Right cardiac atrium (tissue), 5 donors: ENCODE measurements at regions of chr15 and their contacts with region 1.

Region 1: GRCh38 chr15:73633111-73633990 is at the start of gene NPTN:
- DNase-seq: peak; percentile 99 to 100 (median 100)
- ATAC-seq: peak; percentile 97
- H3K4me3 ChIP-seq: peak within 1 kb of the TSS; percentile 98
- H3K27ac ChIP-seq: peak within 1 kb of the TSS; percentile 98
- H3K4me1 ChIP-seq: peaks cover 7% of the 10 kb centered on the region
- H3K27me3 ChIP-seq: no peaks in the 10 kb centered on the region
- total RNA-seq, gene NPTN: 262 to 320 (median 306) TPM

Region 2: DNA sequence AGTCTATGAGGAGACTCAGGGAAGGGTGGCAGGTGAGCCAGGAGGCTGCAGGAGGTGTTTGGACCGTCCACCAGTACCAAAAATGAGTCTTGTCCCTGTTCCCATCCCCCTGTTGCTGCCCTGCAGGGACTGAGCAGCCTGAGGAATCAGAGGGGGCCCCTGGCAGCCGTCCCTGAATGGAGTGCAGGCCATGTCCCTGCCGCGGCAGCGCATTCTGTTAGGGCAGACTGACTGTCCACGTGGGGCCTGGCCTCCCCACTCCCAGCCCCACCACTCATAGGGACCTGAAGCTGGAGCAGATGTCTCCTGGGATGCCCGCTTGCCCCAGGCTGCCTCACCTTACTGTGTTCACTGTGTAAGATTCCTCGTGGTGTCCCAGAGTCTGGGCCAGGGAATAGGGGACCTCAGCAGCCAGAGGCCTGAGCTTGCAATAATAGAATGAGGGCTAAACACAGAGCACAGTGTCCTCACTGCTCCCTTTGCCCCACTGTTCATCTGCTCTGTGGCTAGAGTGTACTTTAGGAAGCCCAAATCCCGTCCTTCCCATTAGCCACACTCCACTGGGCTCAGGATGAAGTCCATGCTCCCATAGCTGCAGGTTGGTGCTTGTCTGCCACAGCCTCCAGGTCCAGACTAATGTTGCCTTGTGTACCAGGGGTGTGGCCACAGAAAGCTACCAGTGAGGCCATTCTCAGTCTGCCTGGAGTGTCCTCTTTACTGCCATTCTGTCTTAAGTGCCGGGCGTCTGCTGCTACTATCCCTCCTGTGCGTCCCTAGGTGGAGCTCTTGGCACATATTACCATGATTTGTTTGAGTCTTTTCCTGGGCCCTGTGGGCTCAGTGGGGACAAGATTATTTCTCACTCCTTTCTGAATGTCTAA is 327.8 kb before region 1 on chr15:
- intact Hi-C with region 1: loop called in 3 of 4 experiments (anchors 10 kb)
- DNase-seq: no peak
- ATAC-seq: peak; percentile 64 to 74
- H3K4me3 ChIP-seq: no peak overlapping the region
- H3K27ac ChIP-seq: no peak overlapping the region
- H3K4me1 ChIP-seq: no peaks in the 10 kb centered on the region
- H3K27me3 ChIP-seq: no peaks in the 10 kb centered on the region

Region 3: GRCh38 chr15:73560501-73561117 is 72.7 kb before region 1 on chr15:
- intact Hi-C with region 1: loop called (anchors 5 kb)
- DNase-seq: no peak
- ATAC-seq: no peak
- H3K4me3 ChIP-seq: no peak overlapping the region
- H3K27ac ChIP-seq: no peak overlapping the region
- H3K4me1 ChIP-seq: peaks cover 3% of the 10 kb centered on the region
- H3K27me3 ChIP-seq: no peaks in the 10 kb centered on the region

Region 4: DNA sequence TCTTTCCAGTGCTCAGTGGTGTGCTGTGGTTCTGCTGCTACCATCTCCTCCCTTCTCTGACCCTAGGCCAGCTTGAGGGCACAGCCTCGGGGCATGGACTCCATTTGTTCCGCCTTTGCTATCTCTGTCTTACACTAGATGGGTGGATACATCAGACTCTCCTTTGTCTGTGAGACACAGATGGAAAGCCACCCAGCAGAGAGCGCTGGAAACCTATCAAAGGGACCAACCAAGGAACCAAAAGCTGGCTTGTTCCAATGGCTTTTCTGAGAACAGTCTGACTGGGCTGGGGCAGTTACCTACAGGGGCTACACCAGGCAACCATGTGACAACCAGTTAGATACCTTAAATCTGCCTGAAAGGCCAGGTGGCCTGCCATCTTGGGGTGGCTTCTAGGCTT is 64.0 kb before region 1 on chr15:
- intact Hi-C with region 1: loop called (anchors 5 kb)
- DNase-seq: no peak
- ATAC-seq: no peak
- H3K4me3 ChIP-seq: no peak overlapping the region
- H3K27ac ChIP-seq: no peak overlapping the region
- H3K4me1 ChIP-seq: peaks cover 3% of the 10 kb centered on the region
- H3K27me3 ChIP-seq: no peaks in the 10 kb centered on the region

Region 5: DNA sequence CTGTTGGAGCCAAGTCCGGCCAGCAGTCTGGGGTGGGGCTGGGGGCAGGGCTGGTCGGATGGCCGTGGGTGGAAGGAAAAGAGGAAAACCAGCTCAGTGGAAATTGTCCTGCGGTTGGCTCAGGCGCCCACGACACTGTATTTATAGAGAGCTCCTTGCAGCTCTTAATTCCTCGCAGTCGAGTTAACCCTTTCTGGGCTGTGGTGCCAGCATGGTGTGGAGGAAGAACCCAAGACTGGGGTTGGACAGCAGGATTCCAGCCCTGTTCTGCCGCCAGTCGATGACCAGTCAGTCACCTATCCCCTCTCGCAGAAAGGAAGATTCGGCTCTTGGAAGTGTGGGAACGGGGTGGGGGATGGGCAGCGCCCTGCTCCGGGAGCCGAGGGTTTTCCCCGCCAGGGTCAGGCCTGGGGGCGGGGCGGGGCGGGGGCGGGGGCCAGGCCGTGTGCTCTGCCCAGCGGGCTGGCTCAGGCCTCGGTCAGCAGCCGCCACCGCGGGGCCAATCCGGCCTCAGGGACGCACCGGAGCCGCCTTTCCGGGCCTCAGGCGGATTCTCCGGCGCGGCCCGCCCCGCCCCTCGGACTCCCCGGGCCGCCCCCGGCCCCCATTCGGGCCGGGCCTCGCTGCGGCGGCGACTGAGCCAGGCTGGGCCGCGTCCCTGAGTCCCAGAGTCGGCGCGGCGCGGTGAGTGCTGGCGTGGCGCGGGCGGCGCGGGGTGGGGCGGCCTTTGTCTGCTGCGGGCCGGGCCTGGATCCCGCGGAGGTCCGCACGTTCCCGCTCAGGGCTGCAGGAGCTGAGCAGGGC is 50.6 kb after region 1 on chr15 and contains the start of gene CD276:
- intact Hi-C with region 1: loop called in 1 of 4 experiments (anchors 10 kb)
- DNase-seq: peak; percentile 86 to 94 (median 92)
- ATAC-seq: peak; percentile 88 to 91
- H3K4me3 ChIP-seq: peak within 1 kb of the TSS; percentile 98
- H3K27ac ChIP-seq: peak within 1 kb of the TSS; percentile 84
- H3K4me1 ChIP-seq: peaks cover 22% of the 10 kb centered on the region
- H3K27me3 ChIP-seq: no peaks in the 10 kb centered on the region
- total RNA-seq, gene CD276: 39.5 to 72.8 (median 44.0) TPM

Region 6: GRCh38 chr15:73741321-73741836 is 108.0 kb after region 1 on chr15:
- intact Hi-C with region 1: no loop called
- DNase-seq: peak in 1 of 3 donors; percentile 55
- ATAC-seq: no peak
- H3K4me3 ChIP-seq: no peak overlapping the region
- H3K27ac ChIP-seq: no peak overlapping the region
- H3K4me1 ChIP-seq: peaks cover 5% of the 10 kb centered on the region
- H3K27me3 ChIP-seq: no peaks in the 10 kb centered on the region